ENCODE measurements at regions of chr6 and their contacts with region 1.

Region 1: DNA sequence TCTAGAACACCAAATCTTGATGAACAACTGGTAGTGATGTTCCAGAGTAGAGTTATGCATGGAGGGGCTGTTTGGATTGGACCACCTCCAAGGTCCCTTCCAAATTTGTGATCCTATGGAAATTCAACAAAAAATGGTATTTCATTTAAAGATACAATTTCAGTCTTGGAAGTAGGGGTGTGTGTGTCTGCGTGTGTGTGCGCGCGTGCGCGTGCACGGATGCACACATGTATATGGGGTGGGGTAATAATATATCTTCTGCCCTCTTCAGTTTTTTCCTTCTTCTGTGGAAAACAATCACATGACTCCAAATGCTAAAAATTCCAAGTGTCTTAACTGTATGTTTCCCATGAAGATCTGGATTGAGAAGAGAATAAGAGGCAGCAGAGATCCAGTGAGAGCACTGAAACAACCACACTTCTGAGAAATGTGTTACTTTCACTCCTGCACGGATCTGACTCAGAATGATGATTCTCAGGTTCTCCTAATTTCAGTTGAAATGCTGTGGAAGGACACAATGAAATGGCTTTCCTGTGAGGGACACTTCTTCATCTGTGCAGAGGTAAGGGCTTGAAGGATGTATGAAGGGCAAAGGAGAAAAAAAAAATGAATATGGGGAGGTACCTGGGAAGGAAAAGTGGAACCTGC is 10.6 kb upstream of the IL17F start:
- DNase-seq: no peak
- H3K4me3 Mint-ChIP-seq: no peak overlapping the region
- H3K27ac Mint-ChIP-seq: no peak overlapping the region
- H3K4me1 Mint-ChIP-seq: peaks cover 35% of the 10 kb centered on the region
- H3K27me3 Mint-ChIP-seq: peaks cover 31% of the 10 kb centered on the region

Region 2: DNA sequence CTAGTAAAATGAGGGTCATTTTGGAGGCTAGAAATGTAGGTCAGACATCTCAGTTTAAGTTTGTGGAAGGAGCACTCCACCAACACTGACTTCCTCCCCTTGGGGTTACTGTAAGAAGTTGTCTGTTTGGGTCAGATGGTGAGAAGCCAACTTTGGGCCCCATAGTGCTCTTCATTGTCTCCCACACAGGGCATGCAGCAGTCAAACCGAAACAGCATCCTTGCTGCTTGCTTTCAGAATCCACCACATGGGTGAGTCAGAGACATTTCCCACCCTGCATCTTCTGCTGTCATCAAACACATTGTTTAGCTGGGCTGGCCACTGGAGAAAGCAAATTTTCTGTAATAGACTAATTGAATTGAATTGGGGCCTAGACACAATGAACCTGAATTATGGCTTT is 27.4 kb before region 1 on chr6:
- intact Hi-C with region 1: loop called (anchors 1 kb)
- DNase-seq: peak; percentile 71
- H3K4me3 Mint-ChIP-seq: no peak overlapping the region
- H3K27ac Mint-ChIP-seq: no peak overlapping the region
- H3K4me1 Mint-ChIP-seq: peaks cover 37% of the 10 kb centered on the region
- H3K27me3 Mint-ChIP-seq: peaks cover 60% of the 10 kb centered on the region

Measured in activated T-helper 2 cell treated with anti-CD3 and anti-CD28 coated beads, Interferon-gamma antibody, Interleukin-2, Interleukin-4, amounts not matched to agents 10 μg/mL and 5 μg/mL and 100 μg/mL, durations not matched to agents 14 hours and 24 hours and 36 hours (primary cell).